ENCODE measurements at regions of chr1 and their contacts with region 1.

Region 1: DNA sequence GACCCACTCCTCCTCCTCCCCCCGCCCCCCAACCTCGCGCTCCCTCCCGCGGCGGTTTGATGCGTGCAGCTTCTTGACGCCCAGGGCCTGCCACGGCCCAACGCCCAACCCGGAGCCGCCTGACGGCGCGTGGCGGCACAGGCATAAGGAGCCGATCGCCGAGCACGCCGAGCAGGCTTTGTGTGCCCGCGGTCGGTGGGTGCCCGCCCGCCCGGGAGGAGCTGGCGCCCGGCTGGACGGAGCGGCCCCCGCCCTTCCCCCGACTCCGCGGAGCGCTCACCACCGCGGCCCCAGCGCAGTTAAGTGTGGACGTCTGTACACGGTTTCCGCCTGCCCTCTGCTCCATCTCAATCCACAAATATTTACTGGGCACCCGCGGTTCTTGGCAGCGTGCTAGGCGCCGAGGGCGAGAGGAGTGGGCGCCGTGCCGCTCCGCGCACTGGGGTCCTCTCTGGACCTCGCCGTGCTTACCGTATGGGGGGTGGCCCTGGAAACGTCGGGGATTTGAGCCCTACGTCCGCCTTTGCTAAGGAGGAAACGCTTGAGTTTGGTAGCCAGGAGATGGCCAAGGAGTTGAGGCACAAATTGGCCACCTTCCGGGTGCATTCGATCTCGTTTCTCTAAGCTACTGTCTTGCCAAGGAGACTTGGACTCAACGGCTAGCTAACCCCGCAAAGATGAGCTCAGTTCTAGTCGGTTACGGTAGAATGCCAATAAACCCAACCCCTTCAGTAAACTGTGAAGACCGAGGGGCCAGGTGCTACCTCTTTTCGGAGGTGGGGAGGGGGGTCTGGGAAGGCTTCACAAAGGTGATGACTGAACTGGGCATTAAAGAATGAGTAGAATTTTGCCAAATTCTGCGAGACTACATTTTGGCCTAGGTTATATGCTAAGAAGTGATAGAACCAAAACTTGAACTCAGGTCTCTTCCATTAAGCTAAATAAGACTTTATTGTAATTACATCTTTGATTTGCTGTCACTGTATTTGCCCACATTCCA is 583 bp upstream of the HDGF start:
- DNase-seq: peak; percentile 98
- ATAC-seq: peak; percentile 84
- H3K4me3 Mint-ChIP-seq: peak overlapping the region; percentile 98
- H3K27ac Mint-ChIP-seq: peak overlapping the region; percentile 93
- H3K4me1 Mint-ChIP-seq: peaks cover 42% of the 10 kb centered on the region
- H3K27me3 Mint-ChIP-seq: no peaks in the 10 kb centered on the region

Region 2: DNA sequence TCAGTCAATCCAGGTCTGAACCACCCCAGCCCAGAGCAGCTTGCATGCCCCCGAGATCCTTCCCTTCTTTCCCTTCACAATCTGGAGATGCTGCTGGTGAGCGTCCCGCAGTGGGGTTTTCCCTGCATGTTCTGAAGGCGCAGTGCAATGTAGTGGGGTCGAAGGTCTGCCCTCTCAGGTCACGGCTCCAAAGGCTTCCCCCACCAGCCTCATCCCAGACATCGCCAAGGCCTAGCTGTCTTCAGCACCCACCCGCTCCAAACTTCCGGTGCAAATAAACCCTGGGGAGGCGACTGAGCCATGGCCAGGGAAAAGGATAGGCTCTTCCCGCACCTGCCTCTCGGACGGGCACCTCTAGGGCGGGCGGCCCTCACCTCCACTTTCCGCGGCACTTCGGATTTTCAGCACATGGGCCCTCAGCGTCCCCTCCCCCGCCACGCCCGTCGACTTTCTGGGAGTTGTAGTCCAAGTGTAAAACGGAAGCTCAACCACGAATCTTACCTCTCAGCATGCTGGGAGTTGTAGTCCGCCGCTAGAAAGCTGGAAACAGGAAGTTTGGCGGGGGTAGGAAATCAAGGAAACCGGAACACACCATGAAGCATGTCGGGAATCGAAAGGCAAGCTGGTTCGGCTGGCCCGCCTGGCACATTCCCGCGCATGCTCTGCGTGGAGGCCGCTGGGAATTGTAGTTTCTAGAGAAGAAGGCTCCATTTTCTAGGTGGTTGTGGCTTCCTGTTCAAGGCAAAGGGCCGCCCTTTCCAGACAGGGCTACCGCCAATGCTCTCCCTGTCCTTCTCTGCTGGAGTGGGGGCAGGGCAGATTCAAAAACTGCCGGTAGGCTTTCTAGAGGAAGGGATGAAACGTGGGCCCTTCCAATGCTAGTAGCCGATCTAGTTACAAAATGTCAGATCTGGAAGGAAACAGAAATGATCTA is 11.1 kb before region 1 on chr1 and contains the start of gene MRPL24:
- CTCF ChIA-PET with region 1: interaction called, 37 read pairs
- DNase-seq: peak; percentile 99
- ATAC-seq: peak; percentile 91
- H3K4me3 Mint-ChIP-seq: peak within 1 kb of the TSS; percentile 95
- H3K27ac Mint-ChIP-seq: peak within 1 kb of the TSS; percentile 96
- H3K4me1 Mint-ChIP-seq: peaks cover 61% of the 10 kb centered on the region
- H3K27me3 Mint-ChIP-seq: no peaks in the 10 kb centered on the region
- total RNA-seq, gene MRPL24: 60.4 to 80.0 TPM

Region 3: GRCh38 chr1:156767101-156767878 is 15.2 kb after region 1 on chr1 and contains the start of gene PRCC:
- CTCF ChIA-PET with region 1: interaction called, 24 read pairs
- DNase-seq: peak; percentile 100
- ATAC-seq: peak; percentile 95
- H3K4me3 Mint-ChIP-seq: no peak within 1 kb of the TSS
- H3K27ac Mint-ChIP-seq: no peak within 1 kb of the TSS
- H3K4me1 Mint-ChIP-seq: peaks cover 41% of the 10 kb centered on the region
- H3K27me3 Mint-ChIP-seq: no peaks in the 10 kb centered on the region
- total RNA-seq, gene PRCC: 68.7 to 99.8 TPM

Measured in activated CD8-positive, alpha-beta memory T cell treated with anti-CD3 and anti-CD28 coated beads, Interleukin-2, amount 10 ng/mL, durations not matched to agents 7 days and 5 days (primary cell).